HEK293 (cell line): ENCODE measurements at regions of chr1 and their contacts with region 1.

Region 1: DNA sequence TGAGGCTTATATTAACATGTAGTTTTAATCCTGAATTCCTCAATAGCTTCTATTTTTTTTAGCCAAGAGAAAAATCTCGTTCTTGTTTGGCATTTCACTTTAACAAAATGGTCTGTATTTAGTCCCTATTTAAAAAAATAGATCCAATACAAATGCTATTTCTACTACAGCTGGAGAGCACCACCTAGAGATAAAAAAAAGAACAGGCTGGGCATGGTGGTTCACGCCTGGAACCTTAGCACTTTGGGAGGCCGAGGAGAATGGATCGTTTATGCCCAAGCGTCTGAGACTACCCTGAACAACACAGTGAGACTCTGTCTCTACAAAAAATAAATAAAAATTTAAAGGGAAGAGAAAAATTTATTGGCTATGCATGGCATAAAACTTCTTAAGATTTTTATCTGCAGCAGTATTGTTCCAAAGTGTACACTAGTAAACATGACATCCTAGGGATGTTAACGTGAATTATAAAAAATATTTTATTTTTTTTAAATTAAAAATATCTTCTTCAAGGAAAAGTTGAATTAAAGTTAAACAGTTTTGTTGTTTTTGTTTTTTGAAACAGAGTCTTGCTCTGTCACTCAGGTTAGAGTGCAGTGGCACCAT is 4.4 kb downstream of the ST7L start:
- H3K4me3 ChIP-seq: no peak overlapping the region
- H3K27ac ChIP-seq: no peak overlapping the region
- H3K4me1 ChIP-seq: no peaks in the 10 kb centered on the region
- CTCF ChIP-seq: peak; percentile 48

Region 2: GRCh38 chr1:112369392-112370285 is 244.9 kb before region 1 on chr1:
- CTCF ChIA-PET with region 1: interaction called, 11 read pairs
- POLR2A ChIA-PET with region 1: no interaction called
- H3K4me3 ChIP-seq: no peak overlapping the region
- H3K27ac ChIP-seq: no peak overlapping the region
- H3K4me1 ChIP-seq: no peaks in the 10 kb centered on the region
- CTCF ChIP-seq: peak; percentile 97

Region 3: DNA sequence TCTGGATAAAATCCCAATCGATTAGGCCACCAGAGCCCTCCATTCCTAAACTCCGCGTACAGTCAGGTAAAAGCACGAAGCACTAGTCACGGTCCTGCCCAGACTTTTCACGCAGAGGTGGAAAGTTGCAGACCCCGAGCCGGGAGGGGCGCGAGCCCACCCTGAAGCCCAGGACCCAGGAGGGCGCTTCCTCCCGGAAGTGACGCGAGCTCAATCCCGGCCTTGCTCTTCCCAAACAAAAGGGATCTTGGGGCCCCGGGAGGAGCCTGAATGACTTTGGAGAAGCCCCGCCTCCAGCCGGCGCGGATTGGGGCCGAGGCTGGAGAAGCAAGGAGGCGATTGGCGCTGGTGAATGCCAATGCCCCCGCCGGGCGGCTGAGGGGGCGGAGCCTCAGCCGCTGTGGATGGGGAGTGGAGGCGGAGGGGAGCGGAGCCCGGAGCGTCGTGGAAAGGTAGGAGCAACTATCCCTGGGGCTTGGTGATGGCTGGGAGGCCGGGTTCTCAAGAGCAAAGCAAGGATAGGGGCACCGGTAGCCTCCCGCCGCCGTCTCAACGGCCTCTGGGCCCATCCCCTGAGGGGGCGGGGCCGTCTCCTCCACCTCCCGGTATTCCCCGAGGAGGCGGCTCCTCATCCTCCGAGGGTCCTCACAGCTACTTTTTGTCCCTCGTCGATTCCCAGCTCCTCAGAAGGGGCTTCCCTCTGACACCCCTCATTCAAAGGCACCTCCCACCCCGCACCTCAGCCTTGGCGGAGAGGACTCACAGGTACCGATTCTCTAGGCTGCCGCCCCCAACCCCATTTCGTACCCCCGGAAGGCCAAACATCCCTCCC is 218.5 kb before region 1 on chr1 and contains the start of gene CTTNBP2NL:
- CTCF ChIA-PET with region 1: interaction called, 60 read pairs
- POLR2A ChIA-PET with region 1: interaction called, 10 read pairs
- H3K4me3 ChIP-seq: peak within 1 kb of the TSS; percentile 71
- H3K27ac ChIP-seq: peak within 1 kb of the TSS; percentile 8; the same call in 1 of the 2 replicates
- H3K4me1 ChIP-seq: peaks cover 16% of the 10 kb centered on the region
- CTCF ChIP-seq: no peak

Region 4: DNA sequence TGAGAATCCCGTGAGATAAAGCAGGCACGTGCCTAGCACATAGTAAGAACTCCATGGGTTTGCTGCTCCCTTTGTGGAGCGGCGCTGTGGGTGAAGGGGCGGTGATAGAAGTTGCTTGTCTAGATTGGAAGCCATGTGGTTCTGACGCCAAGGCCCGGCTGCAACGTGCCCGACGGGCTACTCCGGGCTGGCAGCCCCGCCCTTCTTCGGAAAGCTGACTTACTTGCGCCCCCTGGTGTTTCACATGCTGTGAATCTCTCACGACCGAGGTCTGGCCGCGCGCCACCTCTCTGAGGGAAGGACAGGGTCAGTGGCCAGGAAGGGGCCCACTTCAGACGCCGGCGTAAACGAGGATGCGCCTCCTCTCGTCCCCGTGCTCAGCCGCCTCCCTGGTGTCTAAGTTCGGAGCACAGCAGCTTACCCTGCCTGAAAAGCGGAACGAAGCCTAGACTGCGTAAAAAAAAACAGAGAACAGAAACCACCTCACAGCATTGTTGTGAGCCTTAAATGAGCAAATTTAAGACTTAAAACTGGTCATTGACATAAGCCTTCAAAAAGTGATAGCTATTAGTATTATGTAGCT is 148.4 kb before region 1 on chr1:
- CTCF ChIA-PET with region 1: interaction called, 13 read pairs
- POLR2A ChIA-PET with region 1: no interaction called
- H3K4me3 ChIP-seq: no peak overlapping the region
- H3K27ac ChIP-seq: no peak overlapping the region
- H3K4me1 ChIP-seq: no peaks in the 10 kb centered on the region
- CTCF ChIP-seq: peak; percentile 96

Region 5: DNA sequence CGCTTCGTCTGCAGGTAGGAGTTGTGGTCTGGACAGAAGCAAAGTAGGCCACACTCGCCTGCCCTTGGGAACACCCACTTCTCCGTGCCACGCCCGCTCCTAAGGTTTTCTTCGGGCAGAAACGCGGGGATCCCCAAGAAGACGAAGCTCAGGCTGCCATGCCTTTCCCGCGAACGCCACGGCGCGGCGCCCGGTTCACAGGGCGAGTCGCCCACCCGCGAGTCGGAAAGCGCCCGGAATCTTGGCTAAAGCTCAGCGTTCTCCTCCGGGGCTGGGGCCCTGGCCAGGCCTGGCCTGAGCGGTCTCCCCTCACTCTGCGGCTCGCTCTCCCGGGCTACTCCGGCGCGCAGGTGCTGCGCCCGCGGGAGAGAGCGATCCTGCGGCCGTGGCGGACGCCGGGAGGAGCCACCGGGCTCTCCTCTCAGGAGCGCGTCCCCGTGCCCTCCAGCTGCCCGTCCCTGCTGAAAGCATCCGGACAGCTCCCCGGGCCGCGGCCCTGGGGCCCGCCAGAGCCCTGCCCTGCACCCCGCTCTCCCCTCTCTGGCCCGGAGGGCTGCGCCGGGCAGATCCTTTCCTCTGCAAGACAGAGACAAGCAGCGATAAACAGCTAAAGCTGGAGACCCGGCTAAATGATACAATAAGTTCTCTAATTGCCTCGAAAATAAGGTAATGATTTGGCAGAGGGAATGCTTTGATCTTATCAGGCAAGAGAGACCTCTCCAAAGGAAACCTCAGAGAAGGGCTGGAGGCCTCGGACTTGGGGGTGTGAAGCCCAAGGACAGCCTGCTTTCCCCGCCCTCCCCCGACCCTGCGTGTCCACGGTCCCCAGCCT is 112.5 kb before region 1 on chr1:
- CTCF ChIA-PET with region 1: interaction called, 12 read pairs
- POLR2A ChIA-PET with region 1: no interaction called
- H3K4me3 ChIP-seq: peak overlapping the region; percentile 39
- H3K27ac ChIP-seq: peak overlapping the region; percentile 16; the same call in 1 of the 2 replicates
- H3K4me1 ChIP-seq: peaks cover 3% of the 10 kb centered on the region; the same call in 1 of the 2 replicates
- CTCF ChIP-seq: peak; percentile 90

Region 6: DNA sequence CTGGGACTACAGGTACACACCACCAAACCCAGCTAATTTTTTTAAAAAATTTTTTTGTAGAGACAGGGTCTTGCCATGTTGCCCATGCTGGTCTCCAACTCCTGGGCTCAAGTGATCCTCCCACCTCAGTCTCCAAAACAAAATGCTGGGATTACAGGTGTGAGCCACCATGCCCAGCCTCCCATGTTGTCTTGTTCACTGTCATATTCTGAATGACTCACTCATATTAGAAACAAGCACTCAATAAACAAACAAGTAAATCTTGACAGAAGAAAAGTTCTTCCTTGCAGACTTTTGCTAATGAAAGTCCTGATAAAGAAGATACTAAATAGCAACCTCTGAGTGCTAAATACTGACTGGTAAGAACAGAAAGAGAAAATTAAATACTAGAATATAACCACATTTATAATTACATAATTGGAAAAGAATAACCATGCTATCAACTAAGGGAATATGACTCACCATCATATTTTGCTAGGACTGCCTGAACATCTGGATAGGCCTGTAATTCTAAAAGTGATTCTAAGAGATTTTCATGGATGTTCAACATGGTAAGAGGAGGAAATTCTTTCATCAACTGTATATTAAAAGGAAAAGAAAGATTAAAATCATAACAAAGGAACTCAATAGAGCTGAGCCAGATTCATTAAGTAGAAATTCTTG is 32.9 kb before region 1 on chr1:
- CTCF ChIA-PET with region 1: no interaction called
- POLR2A ChIA-PET with region 1: no interaction called
- H3K4me3 ChIP-seq: no peak overlapping the region
- H3K27ac ChIP-seq: no peak overlapping the region
- H3K4me1 ChIP-seq: no peaks in the 10 kb centered on the region
- CTCF ChIP-seq: no peak

Region 7: GRCh38 chr1:112688781-112689193 is 74.2 kb after region 1 on chr1:
- CTCF ChIA-PET with region 1: no interaction called
- POLR2A ChIA-PET with region 1: no interaction called
- H3K4me3 ChIP-seq: no peak overlapping the region
- H3K27ac ChIP-seq: no peak overlapping the region
- H3K4me1 ChIP-seq: no peaks in the 10 kb centered on the region
- CTCF ChIP-seq: no peak

Region 8: GRCh38 chr1:113036639-113037321 is 422.2 kb after region 1 on chr1:
- CTCF ChIA-PET with region 1: no interaction called
- POLR2A ChIA-PET with region 1: no interaction called
- H3K4me3 ChIP-seq: no peak overlapping the region
- H3K27ac ChIP-seq: no peak overlapping the region
- H3K4me1 ChIP-seq: no peaks in the 10 kb centered on the region
- CTCF ChIP-seq: no peak